Mucosa of descending colon (tissue), 3 donors: ENCODE measurements at regions of chr1 and their contacts with region 1.

Region 1: GRCh38 chr1:45913183-45913683 is 109.8 kb downstream of the MAST2 start:
- DNase-seq: peak in 2 of 3 donors; percentile 63 to 81
- ATAC-seq: peak; percentile 93
- H3K4me3 ChIP-seq: no peak overlapping the region
- H3K4me1 ChIP-seq: no peaks in the 10 kb centered on the region
- CTCF ChIP-seq: no peak

Region 2: DNA sequence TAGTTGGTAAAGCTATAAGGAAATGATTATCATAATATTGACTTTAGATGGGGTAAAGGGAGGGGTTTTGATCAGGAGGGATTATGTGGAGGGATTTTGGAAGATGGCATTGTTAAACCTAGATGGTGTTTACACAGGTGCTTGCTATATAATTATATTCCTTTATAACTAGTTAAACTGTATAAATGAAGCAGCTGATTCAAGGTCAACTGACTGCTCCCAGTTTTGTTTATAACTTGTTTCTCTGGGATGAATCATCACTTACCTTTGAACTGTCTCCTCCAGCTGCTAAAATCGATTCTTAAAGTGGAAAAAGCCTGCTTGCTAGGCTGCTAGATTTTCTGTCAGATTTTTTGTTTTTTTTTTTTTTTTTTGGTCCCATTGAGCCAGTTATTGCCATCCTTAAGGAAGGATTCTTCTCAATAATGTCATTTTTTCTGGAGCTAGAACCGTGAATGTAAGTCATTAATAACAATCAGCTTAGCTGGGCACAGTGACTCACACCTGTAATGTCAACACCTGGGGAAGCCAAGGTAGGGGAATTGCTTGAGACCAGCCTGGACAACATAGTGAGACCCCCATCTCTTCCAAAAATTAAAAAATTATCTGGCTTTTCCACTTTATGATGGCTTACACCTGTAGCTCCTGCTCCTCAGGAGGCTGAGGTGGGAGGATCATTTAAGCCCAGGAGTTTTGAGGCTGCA is 66.0 kb after region 1 on chr1:
- intact Hi-C with region 1: loop called in 1 of 2 experiments (anchors 5 kb)
- DNase-seq: no peak
- ATAC-seq: peak; percentile 78
- H3K4me3 ChIP-seq: no peak overlapping the region
- H3K4me1 ChIP-seq: peaks cover 32% of the 10 kb centered on the region
- CTCF ChIP-seq: no peak